GM12878 (cell line): ENCODE measurements at regions of chr6 and their contacts with region 1.

Region 1: GRCh38 chr6:114785235-114786127 is 442.7 kb upstream of the HS3ST5 start:
- DNase-seq: peak; percentile 3
- ATAC-seq: peak; percentile 70
- H3K4me3 ChIP-seq: no peak overlapping the region
- H3K27ac ChIP-seq: no peak overlapping the region
- H3K4me1 ChIP-seq: no peaks in the 10 kb centered on the region
- H3K27me3 ChIP-seq: no peaks in the 10 kb centered on the region
- CTCF ChIP-seq: no peak
- EP300 ChIP-seq: no peak
- POLR2A ChIP-seq: no peak
- RAD21 ChIP-seq: peak; percentile 39; the same call in 1 of the 2 replicates

Region 2: DNA sequence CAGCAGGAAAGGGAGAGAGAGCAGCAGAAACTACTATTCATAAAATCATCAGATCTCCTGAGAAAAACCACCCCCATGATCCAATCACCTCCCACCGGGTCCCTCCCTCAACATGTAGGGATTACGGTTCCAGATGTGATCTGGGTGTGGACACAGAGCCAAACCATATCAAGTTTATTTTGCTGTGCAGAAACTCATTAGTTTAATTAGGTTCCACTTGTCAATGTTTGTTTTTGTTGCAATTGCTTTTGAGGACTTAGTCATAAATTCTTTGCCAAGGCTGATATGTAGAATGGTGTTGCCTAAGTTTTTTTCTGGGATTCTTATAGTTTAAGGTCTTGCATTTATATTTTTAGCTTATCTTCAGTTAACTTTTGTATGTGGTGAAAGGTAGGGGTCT is 20.6 kb before region 1 on chr6:
- CTCF ChIA-PET with region 1: interaction called, 5 read pairs
- POLR2A ChIA-PET with region 1: no interaction called
- RAD21 ChIA-PET with region 1: no interaction called
- SMC1A ChIA-PET with region 1: interaction called, 21 read pairs
- in situ Hi-C with region 1: no loop called
- intact Hi-C with region 1: no loop called
- DNase-seq: no peak
- ATAC-seq: no peak
- H3K4me3 ChIP-seq: no peak overlapping the region
- H3K27ac ChIP-seq: no peak overlapping the region
- H3K4me1 ChIP-seq: no peaks in the 10 kb centered on the region
- H3K27me3 ChIP-seq: no peaks in the 10 kb centered on the region
- CTCF ChIP-seq: no peak
- EP300 ChIP-seq: no peak
- POLR2A ChIP-seq: no peak
- RAD21 ChIP-seq: no peak